ENCODE measurements at regions of chr12 and their contacts with region 1.

Region 1: GRCh38 chr12:49636979-49637755 is 13.8 kb downstream of the PRPF40B start:
- DNase-seq: peak; percentile 82
- H3K4me3 ChIP-seq: no peak overlapping the region
- H3K27ac ChIP-seq: no peak overlapping the region
- H3K4me1 ChIP-seq: no peaks in the 10 kb centered on the region
- H3K27me3 ChIP-seq: no peaks in the 10 kb centered on the region
- CTCF ChIP-seq: peak; percentile 79

Region 2: GRCh38 chr12:49553512-49554088 is 83.6 kb before region 1 on chr12:
- CTCF ChIA-PET with region 1: no interaction called
- POLR2A ChIA-PET with region 1: no interaction called
- intact Hi-C with region 1: no loop called
- DNase-seq: peak; percentile 34
- H3K4me3 ChIP-seq: no peak overlapping the region
- H3K27ac ChIP-seq: no peak overlapping the region
- H3K4me1 ChIP-seq: no peaks in the 10 kb centered on the region
- H3K27me3 ChIP-seq: no peaks in the 10 kb centered on the region
- CTCF ChIP-seq: peak; percentile 45

Region 3: GRCh38 chr12:49730568-49731101 is 93.5 kb after region 1 on chr12:
- CTCF ChIA-PET with region 1: no interaction called
- POLR2A ChIA-PET with region 1: interaction called, 20 read pairs
- intact Hi-C with region 1: no loop called
- DNase-seq: no peak
- H3K4me3 ChIP-seq: no peak overlapping the region
- H3K27ac ChIP-seq: no peak overlapping the region
- H3K4me1 ChIP-seq: no peaks in the 10 kb centered on the region
- H3K27me3 ChIP-seq: no peaks in the 10 kb centered on the region
- CTCF ChIP-seq: no peak

Region 4: GRCh38 chr12:49763006-49763591 is 125.9 kb after region 1 on chr12:
- CTCF ChIA-PET with region 1: no interaction called
- POLR2A ChIA-PET with region 1: interaction called, 16 read pairs
- intact Hi-C with region 1: no loop called
- DNase-seq: peak; percentile 79
- H3K4me3 ChIP-seq: no peak overlapping the region
- H3K27ac ChIP-seq: peak overlapping the region; percentile 22
- H3K4me1 ChIP-seq: no peaks in the 10 kb centered on the region
- H3K27me3 ChIP-seq: no peaks in the 10 kb centered on the region
- CTCF ChIP-seq: peak; percentile 89

Measured in A673 (cell line).